H1 (cell line): ENCODE measurements at regions of chr15 and their contacts with region 1.

Region 1: GRCh38 chr15:85274315-85275233 is 105.8 kb upstream of the AKAP13 start:
- DNase-seq: no peak
- H3K4me3 ChIP-seq: no peak overlapping the region
- H3K27ac ChIP-seq: no peak overlapping the region
- H3K4me1 ChIP-seq: no peaks in the 10 kb centered on the region
- H3K27me3 ChIP-seq: no peaks in the 10 kb centered on the region; a peak in 1 of 7 replicates
- CTCF ChIP-seq: no peak
- EP300 ChIP-seq: no peak
- POLR2A ChIP-seq: no peak
- RAD21 ChIP-seq: no peak

Region 2: DNA sequence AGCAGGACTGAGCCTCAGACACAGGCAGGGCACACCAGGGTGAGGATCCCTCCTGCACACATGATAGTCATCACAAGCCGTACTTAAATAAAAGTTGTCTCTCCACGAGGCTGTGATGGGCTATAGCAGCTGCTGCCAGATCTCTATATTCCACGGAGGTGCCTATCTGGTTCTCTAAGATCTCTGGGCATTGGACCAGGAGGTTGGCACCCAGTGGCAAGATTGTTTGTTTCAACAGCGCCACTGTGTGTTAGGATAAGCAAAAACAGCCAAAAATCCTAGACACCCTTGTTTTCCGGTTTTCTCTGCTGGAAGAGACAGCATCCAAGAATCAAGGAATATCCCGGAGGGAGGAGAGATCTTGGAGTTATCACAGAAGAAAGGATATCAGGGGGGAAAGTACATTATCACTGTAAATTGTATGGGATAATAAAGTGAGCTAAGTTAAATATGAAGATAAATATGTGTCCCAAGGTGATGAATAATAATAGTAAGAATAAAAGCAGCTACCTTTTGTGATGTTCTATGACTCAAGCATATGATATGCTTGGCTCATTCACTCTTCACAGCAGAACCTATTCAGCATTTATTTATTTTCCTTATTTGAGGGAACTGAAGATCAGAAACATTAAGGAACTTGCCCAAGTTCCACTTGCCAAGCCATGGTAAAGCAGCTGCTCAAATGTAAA is 15.2 kb after region 1 on chr15:
- CTCF ChIA-PET with region 1: interaction called, 17 read pairs
- POLR2A ChIA-PET with region 1: no interaction called
- DNase-seq: no peak
- H3K4me3 ChIP-seq: no peak overlapping the region
- H3K27ac ChIP-seq: no peak overlapping the region
- H3K4me1 ChIP-seq: no peaks in the 10 kb centered on the region
- H3K27me3 ChIP-seq: no peaks in the 10 kb centered on the region; a peak in 2 of 7 replicates
- CTCF ChIP-seq: peak; percentile 9 to 75 (median 66)
- EP300 ChIP-seq: no peak
- POLR2A ChIP-seq: no peak
- RAD21 ChIP-seq: peak; percentile 67 to 77